ENCODE measurements at regions of chrX and their contacts with region 1.

Region 1: GRCh38 chrX:136268051-136269048 is 17.1 kb upstream of the MAP7D3 start:
- DNase-seq: no peak
- ATAC-seq: peak; percentile 45
- H3K4me3 Mint-ChIP-seq: no peak overlapping the region
- H3K27ac Mint-ChIP-seq: no peak overlapping the region
- H3K4me1 Mint-ChIP-seq: peaks cover 8% of the 10 kb centered on the region
- H3K27me3 Mint-ChIP-seq: no peaks in the 10 kb centered on the region
- CTCF ChIP-seq: no peak

Region 2: GRCh38 chrX:136162831-136163570 is 105.3 kb before region 1 on chrX:
- CTCF ChIA-PET with region 1: interaction called, 12 read pairs
- POLR2A ChIA-PET with region 1: no interaction called
- intact Hi-C with region 1: loop called (anchors 5 kb)
- DNase-seq: peak; percentile 14
- ATAC-seq: peak; percentile 50
- H3K4me3 Mint-ChIP-seq: no peak overlapping the region
- H3K27ac Mint-ChIP-seq: no peak overlapping the region
- H3K4me1 Mint-ChIP-seq: no peaks in the 10 kb centered on the region
- H3K27me3 Mint-ChIP-seq: no peaks in the 10 kb centered on the region
- CTCF ChIP-seq: no peak

Region 3: DNA sequence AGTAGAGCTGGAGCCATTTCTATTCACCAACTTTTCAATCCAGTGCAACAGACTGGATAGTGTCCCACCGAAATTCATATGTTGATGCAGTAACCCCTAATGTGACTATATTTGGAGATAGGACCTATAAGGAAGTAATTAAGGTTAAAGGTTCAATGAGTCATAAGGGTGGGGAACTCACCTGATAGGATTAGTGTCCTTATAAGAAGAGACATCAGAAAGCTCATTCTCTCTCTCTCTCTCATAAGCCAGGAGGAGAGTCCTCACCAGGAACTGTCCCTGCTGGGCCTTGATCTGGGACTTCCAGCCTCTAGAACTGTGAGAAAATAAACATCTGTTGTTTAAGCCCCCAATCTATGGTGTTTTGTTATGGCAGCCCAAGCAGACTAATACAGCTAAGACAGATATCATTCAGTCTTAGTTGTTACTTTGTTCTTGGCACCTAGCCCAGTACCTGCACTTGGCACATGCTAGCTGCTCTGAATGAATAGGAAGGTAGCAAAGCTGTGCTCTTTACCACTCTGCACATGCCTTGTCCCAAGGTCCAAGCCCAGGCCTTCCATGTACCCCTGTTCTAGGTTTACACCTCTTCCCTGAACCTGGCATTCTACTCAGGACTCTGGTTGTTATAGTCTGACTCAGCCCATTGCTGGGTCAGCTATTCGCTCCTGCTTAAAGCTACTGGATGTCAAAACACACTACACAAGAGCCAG is 200.2 kb after region 1 on chrX:
- CTCF ChIA-PET with region 1: no interaction called
- POLR2A ChIA-PET with region 1: no interaction called
- intact Hi-C with region 1: no loop called
- DNase-seq: no peak
- ATAC-seq: no peak
- H3K4me3 Mint-ChIP-seq: no peak overlapping the region
- H3K27ac Mint-ChIP-seq: no peak overlapping the region
- H3K4me1 Mint-ChIP-seq: no peaks in the 10 kb centered on the region
- H3K27me3 Mint-ChIP-seq: peaks cover 5% of the 10 kb centered on the region
- CTCF ChIP-seq: no peak